Body of pancreas (tissue), 4 donors: ENCODE measurements at regions of chr19 and their contacts with region 1.

Region 1: DNA sequence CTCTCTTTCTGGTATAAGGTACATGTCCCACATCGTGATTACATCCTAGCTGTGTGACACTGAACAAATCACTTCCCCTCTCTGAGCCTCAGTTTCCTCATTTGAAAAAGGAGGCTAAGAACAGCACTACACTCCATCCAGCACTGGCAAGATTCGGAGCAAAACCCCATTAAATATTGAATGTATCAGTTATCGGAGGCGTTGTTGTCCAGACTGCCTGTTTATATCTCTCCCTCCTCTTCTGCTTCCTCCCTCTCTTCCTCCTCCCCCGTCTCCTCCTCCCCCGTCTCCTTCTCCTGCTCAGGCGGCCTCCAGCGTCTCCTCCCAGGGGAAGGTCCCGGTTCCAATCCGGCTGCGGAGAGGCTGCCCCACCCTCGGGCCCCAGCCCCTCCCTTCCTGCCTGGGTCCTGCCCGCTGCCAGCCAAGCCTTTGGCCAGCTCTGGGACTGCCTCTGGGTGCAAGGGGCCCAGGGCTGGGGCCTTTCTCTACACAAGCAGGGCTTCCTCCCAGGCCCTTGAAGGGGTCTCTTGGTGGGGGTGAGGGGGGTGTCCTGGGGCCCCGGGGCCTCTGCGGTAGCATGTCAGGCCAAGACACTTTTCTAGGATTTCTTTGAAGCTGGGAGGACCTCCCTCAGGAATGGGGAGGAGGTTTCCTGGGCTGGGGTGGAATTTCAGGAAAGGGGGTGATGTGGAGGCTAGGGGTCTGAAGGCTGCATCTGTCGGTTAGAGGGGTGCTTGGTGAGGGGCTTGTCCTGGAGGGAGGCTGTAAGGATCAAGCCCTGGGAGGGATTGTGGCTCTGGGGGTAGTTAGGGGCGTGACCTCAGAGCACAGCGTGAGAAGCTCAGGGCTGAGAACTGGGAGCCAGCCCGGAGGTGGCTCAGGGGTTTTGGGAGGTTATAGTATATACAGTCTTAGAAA is 1.9 kb downstream of the RRAS start:
- DNase-seq: peak; percentile 57 to 79 (median 66)
- ATAC-seq: no peak
- H3K4me3 ChIP-seq: no peak overlapping the region
- H3K27ac ChIP-seq: peak overlapping the region in 3 of 4 donors; percentile 23 to 63 (median 49)
- H3K4me1 ChIP-seq: peaks cover 37% of the 10 kb centered on the region
- H3K27me3 ChIP-seq: no peaks in the 10 kb centered on the region
- CTCF ChIP-seq: no peak
- POLR2A ChIP-seq: no peak

Region 2: GRCh38 chr19:49595819-49596404 is 42.2 kb before region 1 on chr19:
- intact Hi-C with region 1: loop called (anchors 5 kb)
- DNase-seq: no peak
- ATAC-seq: no peak
- H3K4me3 ChIP-seq: no peak overlapping the region
- H3K27ac ChIP-seq: no peak overlapping the region
- H3K4me1 ChIP-seq: peaks cover 24% of the 10 kb centered on the region
- H3K27me3 ChIP-seq: no peaks in the 10 kb centered on the region
- CTCF ChIP-seq: no peak
- POLR2A ChIP-seq: no peak